ENCODE measurements at regions of chr16 and their contacts with region 1.

Region 1: GRCh38 chr16:49350265-49351095 is 23.1 kb upstream of the C16orf78 start:
- DNase-seq: peak; percentile 55 to 91 (median 78)
- H3K4me3 ChIP-seq: no peak overlapping the region
- H3K27ac ChIP-seq: peak overlapping the region in 1 of 59 donors; percentile 34
- H3K27me3 ChIP-seq: peaks cover 0 to 74% (median 23%) of the 10 kb centered on the region in 45 donors
- CTCF ChIP-seq: peak; percentile 54 to 96 (median 88)

Region 2: GRCh38 chr16:48831076-48831722 is 519.3 kb before region 1 on chr16:
- intact Hi-C with region 1: loop called in 1 of 2 experiments (anchors 10 kb)
- DNase-seq: no peak
- H3K4me3 ChIP-seq: no peak overlapping the region
- H3K27ac ChIP-seq: no peak overlapping the region
- H3K27me3 ChIP-seq: peaks cover 0 to 50% (median 11%) of the 10 kb centered on the region in 45 donors
- CTCF ChIP-seq: peak in 10 of 56 donors; percentile 5 to 33 (median 22)

Region 3: GRCh38 chr16:48892893-48893292 is 457.6 kb before region 1 on chr16:
- intact Hi-C with region 1: no loop called
- DNase-seq: no peak
- H3K4me3 ChIP-seq: no peak overlapping the region
- H3K27ac ChIP-seq: no peak overlapping the region
- H3K27me3 ChIP-seq: peaks cover 0 to 52% (median 13%) of the 10 kb centered on the region in 45 donors
- CTCF ChIP-seq: no peak

Measured in dorsolateral prefrontal cortex (tissue), 120 donors.